Activated CD8-positive, alpha-beta T cell treated with anti-CD3 and anti-CD28 coated beads, Interleukin-2, amount 10 ng/mL, durations not matched to agents 7 days and 5 days (primary cell): ENCODE measurements at regions of chr3 and their contacts with region 1.

Region 1: GRCh38 chr3:67790043-67790442 is 135.6 kb upstream of the SUCLG2 start:
- DNase-seq: peak; percentile 72
- ATAC-seq: peak; percentile 86
- H3K4me3 Mint-ChIP-seq: no peak overlapping the region
- H3K27ac Mint-ChIP-seq: no peak overlapping the region
- H3K4me1 Mint-ChIP-seq: peaks cover 13% of the 10 kb centered on the region
- H3K27me3 Mint-ChIP-seq: peaks cover 2% of the 10 kb centered on the region

Region 2: DNA sequence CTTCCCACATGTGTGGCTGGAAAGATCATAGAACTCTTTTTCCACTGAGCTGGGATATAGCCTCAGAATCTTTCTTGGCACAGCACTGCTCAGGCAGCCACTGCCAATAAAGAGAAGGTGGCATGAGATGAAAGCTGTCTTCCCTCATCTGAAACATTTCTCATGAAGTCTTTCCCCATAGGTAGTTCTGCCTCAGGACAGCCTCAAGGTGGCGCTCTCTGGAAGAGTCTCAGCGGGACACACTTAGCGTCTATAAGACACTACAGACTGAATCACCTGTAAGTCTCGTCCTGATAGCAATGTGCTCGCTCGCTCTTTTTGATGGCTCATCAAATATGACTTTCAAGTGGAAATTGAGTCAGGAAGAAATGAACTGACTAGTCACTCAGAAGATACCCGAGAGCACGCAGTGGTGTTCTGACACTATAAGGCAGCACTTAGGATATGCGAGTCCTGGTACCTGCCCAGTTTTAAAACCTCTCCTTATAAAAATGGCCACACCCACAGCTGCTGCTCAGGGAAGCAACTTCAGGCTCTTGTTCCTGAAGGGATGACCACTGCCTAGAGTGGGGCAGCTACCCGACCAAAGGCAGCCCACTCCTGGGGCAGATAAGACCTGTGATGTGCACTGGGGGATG is 405.2 kb before region 1 on chr3:
- CTCF ChIA-PET with region 1: interaction called, 82 read pairs
- POLR2A ChIA-PET with region 1: interaction called, 3 read pairs
- DNase-seq: peak; percentile 57
- ATAC-seq: peak; percentile 57
- H3K4me3 Mint-ChIP-seq: no peak overlapping the region
- H3K27ac Mint-ChIP-seq: no peak overlapping the region
- H3K4me1 Mint-ChIP-seq: peaks cover 12% of the 10 kb centered on the region
- H3K27me3 Mint-ChIP-seq: no peaks in the 10 kb centered on the region

Region 3: GRCh38 chr3:67593761-67594244 is 196.2 kb before region 1 on chr3:
- CTCF ChIA-PET with region 1: interaction called, 10 read pairs
- POLR2A ChIA-PET with region 1: no interaction called
- DNase-seq: no peak
- ATAC-seq: no peak
- H3K4me3 Mint-ChIP-seq: no peak overlapping the region
- H3K27ac Mint-ChIP-seq: no peak overlapping the region
- H3K4me1 Mint-ChIP-seq: peaks cover 32% of the 10 kb centered on the region
- H3K27me3 Mint-ChIP-seq: no peaks in the 10 kb centered on the region

Region 4: DNA sequence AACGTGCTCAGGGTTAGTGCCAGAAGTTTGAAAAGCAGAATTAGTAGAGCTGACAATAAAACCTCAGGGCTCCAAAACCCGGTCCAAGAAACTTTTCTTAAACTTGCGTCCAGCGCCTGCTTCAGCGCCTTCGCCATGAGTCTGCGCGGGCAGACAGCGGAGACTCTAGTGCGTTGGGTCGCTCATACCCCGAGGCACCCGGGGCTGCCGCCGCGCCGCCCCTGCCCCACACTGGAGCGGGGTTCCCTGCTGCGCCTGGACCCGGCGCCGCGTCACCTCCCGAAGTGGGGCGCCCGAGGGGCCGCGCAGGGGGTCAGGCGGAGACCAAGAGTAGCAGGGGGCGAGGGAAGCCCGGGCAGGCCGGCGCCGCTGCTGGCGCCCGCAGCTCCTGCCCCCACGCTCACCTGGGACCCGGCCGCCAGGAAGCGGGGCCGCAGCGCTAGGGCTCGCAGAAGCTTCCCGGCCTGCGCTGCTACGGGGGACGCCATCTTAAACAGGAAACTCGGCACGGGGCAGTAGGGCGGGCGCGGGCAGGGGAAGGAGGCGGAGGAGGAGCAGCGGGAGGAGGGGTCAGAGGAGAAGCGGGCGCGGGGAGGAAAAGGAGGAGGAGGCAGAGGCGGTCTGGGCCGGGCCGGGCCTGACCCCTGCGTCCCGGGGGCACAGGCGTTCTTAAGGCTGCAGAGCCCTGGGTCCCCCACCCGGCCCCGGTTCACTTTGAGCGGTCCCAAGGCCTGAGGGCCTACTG is 135.8 kb before region 1 on chr3 and contains the start of gene SUCLG2:
- CTCF ChIA-PET with region 1: interaction called, 14 read pairs
- POLR2A ChIA-PET with region 1: interaction called, 4 read pairs
- DNase-seq: peak; percentile 91
- ATAC-seq: peak; percentile 76
- H3K4me3 Mint-ChIP-seq: peak within 1 kb of the TSS; percentile 82
- H3K27ac Mint-ChIP-seq: peak within 1 kb of the TSS; percentile 93
- H3K4me1 Mint-ChIP-seq: peaks cover 68% of the 10 kb centered on the region
- H3K27me3 Mint-ChIP-seq: no peaks in the 10 kb centered on the region
- total RNA-seq, gene SUCLG2: 51.7 to 55.0 TPM

Region 5: DNA sequence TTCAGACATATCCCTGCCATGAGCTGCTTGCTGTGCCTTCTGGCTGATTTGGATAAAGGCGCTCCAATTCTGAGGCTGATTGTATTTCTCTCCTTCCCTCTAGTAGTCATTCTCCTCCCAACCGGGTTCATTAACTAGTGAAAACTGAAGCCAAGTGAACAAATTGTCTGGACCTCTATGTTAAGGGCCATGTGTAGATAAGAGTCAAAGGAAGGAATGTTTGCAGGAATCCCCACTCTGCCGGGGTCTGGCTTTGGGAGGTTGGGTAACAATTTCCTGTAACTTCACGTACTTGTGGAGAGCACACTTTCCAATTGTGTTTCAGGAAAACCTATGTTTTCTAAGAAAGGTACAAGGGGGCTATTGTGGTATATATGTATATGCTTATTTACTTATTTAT is 97.4 kb before region 1 on chr3:
- CTCF ChIA-PET with region 1: no interaction called
- POLR2A ChIA-PET with region 1: no interaction called
- DNase-seq: no peak
- ATAC-seq: no peak
- H3K4me3 Mint-ChIP-seq: no peak overlapping the region
- H3K27ac Mint-ChIP-seq: no peak overlapping the region
- H3K4me1 Mint-ChIP-seq: no peaks in the 10 kb centered on the region
- H3K27me3 Mint-ChIP-seq: no peaks in the 10 kb centered on the region

Region 6: GRCh38 chr3:67723863-67724262 is 66.2 kb before region 1 on chr3:
- CTCF ChIA-PET with region 1: no interaction called
- POLR2A ChIA-PET with region 1: no interaction called
- DNase-seq: no peak
- ATAC-seq: no peak
- H3K4me3 Mint-ChIP-seq: no peak overlapping the region
- H3K27ac Mint-ChIP-seq: no peak overlapping the region
- H3K4me1 Mint-ChIP-seq: no peaks in the 10 kb centered on the region
- H3K27me3 Mint-ChIP-seq: no peaks in the 10 kb centered on the region

Region 7: GRCh38 chr3:68103811-68104210 is 313.8 kb after region 1 on chr3:
- CTCF ChIA-PET with region 1: no interaction called
- POLR2A ChIA-PET with region 1: no interaction called
- DNase-seq: no peak
- ATAC-seq: no peak
- H3K4me3 Mint-ChIP-seq: no peak overlapping the region
- H3K27ac Mint-ChIP-seq: no peak overlapping the region
- H3K4me1 Mint-ChIP-seq: peaks cover 5% of the 10 kb centered on the region
- H3K27me3 Mint-ChIP-seq: no peaks in the 10 kb centered on the region